HCT116 (cell line): ENCODE measurements at regions of chr15 and their contacts with region 1.

Region 1: DNA sequence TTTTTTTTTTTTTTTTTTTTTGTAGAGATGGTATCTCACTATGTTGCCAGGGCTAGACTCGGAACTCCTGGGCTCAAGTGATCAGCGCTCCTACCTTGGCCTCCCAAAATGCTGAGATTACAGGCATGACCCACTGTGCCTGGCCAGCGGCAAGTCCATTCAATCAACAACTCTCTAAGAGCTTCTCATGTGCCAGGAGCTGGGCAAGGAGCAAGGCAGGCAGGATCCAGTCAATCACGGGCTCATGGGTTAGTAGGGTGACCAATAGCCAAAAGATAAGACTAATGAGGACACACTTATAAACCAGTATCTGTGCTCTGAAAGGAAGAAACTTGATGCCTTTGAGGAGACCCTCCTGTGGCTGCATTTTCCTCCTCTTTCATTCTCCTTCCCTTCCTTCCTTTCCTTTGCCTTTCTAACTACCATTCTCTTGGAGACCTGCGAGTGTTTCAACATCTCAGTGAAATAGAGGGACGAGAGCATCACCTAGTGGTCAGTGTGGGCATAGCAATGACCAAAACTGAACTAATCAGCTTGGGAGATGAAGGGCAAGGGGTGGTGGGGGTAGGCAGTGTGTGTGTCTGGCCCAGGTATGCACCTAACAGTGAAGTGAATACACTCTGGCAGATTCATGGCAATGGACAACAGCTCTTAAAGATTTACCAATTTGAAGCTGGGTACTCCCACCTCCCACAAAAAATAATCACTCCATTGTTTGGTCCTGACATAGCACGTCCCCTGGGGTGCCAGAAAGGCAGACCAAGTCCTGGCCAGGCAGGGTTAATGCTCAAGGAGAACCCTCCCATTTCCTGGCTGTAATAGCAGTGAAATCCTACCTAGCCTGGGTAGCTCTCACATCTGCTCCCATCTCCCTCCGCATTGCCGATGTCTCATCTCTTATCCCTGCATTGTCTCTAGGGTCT is 6.2 kb downstream of the RPP25 start:
- DNase-seq: peak; percentile 60
- ATAC-seq: peak; percentile 70
- H3K4me3 ChIP-seq: no peak overlapping the region
- H3K27ac ChIP-seq: no peak overlapping the region
- H3K4me1 ChIP-seq: peaks cover 26 to 48% of the 10 kb centered on the region in 2 experiments
- H3K27me3 ChIP-seq: no peaks in the 10 kb centered on the region
- CTCF ChIP-seq: peak in 2 of 3 experiments; percentile 98 to 100; a peak in 4 of 6 replicates
- POLR2A ChIP-seq: no peak
- RAD21 ChIP-seq: no peak

Region 2: DNA sequence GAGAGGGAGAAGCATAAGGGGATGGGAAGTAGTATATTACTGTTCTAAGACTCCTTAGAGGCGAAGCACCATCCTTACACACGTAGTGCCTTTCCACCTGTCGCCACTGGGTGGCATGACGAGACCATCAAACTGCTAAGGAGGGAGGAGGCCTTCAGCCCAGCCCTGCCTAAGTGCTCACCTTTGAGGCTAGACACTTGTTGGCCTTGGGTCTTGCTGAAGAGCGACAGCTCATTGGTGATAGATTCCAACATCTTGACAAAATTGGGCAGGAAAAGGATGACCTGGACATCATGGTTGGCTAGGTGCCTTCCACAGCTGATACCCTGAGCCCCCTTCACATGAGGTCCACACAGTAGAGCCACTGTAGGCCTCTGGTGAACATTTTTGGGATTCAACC is 315.1 kb before region 1 on chr15:
- CTCF ChIA-PET with region 1: interaction called, 5 read pairs
- POLR2A ChIA-PET with region 1: no interaction called
- RAD21 ChIA-PET with region 1: no interaction called
- intact Hi-C with region 1: loop called (anchors 1 kb)
- DNase-seq: no peak
- ATAC-seq: peak; percentile 86
- H3K4me3 ChIP-seq: no peak overlapping the region
- H3K27ac ChIP-seq: no peak overlapping the region
- H3K4me1 ChIP-seq: no peaks in the 10 kb centered on the region
- H3K27me3 ChIP-seq: no peaks in the 10 kb centered on the region
- CTCF ChIP-seq: peak; percentile 87 to 94 (median 88)
- POLR2A ChIP-seq: no peak
- RAD21 ChIP-seq: peak; percentile 96

Region 3: DNA sequence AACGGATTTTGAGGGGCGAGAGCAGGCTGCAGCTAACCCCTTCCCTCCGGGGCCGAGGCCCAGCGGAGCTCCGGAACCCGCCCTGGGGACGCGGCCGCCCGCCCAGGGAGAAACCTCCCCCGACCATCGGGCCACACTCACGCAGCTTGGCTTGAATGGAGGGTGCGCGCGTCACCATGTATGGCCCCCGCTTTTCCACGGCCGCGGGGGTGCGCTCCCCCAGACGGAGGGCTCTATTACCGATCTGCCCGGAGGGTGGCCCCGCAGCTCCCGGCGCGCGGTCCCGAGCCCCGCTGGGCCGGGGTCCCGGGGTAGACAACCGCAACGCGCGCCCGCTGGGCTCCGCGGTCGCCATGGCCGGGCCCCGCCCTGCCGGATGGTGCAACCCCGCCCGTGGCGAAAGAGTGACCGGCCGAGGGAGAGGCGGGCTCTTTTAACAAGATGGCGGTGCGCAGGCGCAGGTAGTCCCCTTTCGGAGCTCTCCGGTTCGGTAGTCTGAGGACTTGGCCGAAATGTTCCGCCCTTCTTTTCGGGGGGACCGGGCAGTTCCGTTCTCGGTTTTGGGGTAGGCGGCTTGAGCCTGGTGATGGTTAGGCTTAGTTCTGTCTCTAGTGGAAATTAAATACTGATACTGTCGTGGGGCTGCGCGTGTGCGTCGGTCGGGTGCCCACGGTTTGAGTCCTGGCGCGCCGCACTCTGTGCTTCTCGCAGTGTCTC is 43.7 kb before region 1 on chr15 and contains the start of gene FAM219B:
- CTCF ChIA-PET with region 1: interaction called, 12 read pairs
- POLR2A ChIA-PET with region 1: no interaction called
- RAD21 ChIA-PET with region 1: interaction called in 1 of 2 experiments, 3 read pairs
- intact Hi-C with region 1: no loop called
- DNase-seq: peak; percentile 65
- ATAC-seq: peak; percentile 90
- H3K4me3 ChIP-seq: peak within 1 kb of the TSS; percentile 73 to 96
- H3K27ac ChIP-seq: peak within 1 kb of the TSS; percentile 89
- H3K4me1 ChIP-seq: peaks cover 10 to 17% of the 10 kb centered on the region in 2 experiments; a peak in 2 of 4 replicates
- H3K27me3 ChIP-seq: no peaks in the 10 kb centered on the region
- CTCF ChIP-seq: no peak
- POLR2A ChIP-seq: peak; percentile 89
- RAD21 ChIP-seq: no peak
- total RNA-seq, gene FAM219B: 64.3 TPM

Region 4: DNA sequence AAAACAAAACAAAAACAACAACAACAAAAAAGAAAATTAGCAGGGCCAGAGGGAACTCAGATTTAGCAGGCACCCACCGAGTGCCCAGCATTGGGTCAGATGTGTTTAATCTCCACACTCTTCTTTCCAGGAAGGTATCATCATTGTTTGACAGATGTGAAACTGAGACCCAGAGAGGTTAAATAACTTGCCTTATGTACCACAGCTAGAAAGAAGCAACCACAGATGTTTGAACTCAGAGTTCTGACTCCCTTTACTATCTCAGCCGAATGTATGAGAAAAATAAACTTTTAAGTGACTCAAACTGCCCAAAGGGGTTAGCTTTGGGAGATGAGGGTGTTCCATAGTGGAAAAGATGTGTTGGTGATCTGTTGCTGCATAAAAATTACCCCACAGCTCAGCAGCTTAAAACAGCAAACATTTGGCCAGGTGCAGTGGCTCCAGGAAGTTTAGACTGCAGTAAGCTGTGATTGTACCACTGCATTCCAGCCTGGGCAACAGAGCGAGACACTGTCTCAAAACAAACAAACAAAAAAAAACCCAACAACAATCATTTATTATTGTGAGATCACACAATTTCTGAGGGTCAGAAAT is 10.8 kb after region 1 on chr15:
- CTCF ChIA-PET with region 1: interaction called, 10 read pairs
- POLR2A ChIA-PET with region 1: interaction called, 3 read pairs
- RAD21 ChIA-PET with region 1: no interaction called
- intact Hi-C with region 1: no loop called
- DNase-seq: no peak
- ATAC-seq: no peak
- H3K4me3 ChIP-seq: no peak overlapping the region
- H3K27ac ChIP-seq: no peak overlapping the region
- H3K4me1 ChIP-seq: peaks cover 11 to 42% of the 10 kb centered on the region in 2 experiments
- H3K27me3 ChIP-seq: no peaks in the 10 kb centered on the region
- CTCF ChIP-seq: no peak
- POLR2A ChIP-seq: no peak
- RAD21 ChIP-seq: no peak

Region 5: GRCh38 chr15:74988007-74988800 is 37.9 kb after region 1 on chr15:
- CTCF ChIA-PET with region 1: interaction called, 3 read pairs
- POLR2A ChIA-PET with region 1: no interaction called
- RAD21 ChIA-PET with region 1: interaction called in 1 of 2 experiments, 5 read pairs
- intact Hi-C with region 1: loop called (anchors 5 kb)
- DNase-seq: peak; percentile 41
- ATAC-seq: peak; percentile 99
- H3K4me3 ChIP-seq: no peak overlapping the region
- H3K27ac ChIP-seq: no peak overlapping the region
- H3K4me1 ChIP-seq: peaks cover 10 to 11% of the 10 kb centered on the region in 2 experiments
- H3K27me3 ChIP-seq: 0 out of 2 replicates have a peak, but pooled peaks cover 4% of the 10 kb centered on the region
- CTCF ChIP-seq: peak; percentile 82 to 88 (median 85)
- POLR2A ChIP-seq: no peak
- RAD21 ChIP-seq: peak; percentile 89

Region 6: GRCh38 chr15:75570126-75570845 is 619.9 kb after region 1 on chr15:
- CTCF ChIA-PET with region 1: no interaction called
- POLR2A ChIA-PET with region 1: no interaction called
- RAD21 ChIA-PET with region 1: no interaction called
- intact Hi-C with region 1: no loop called
- DNase-seq: no peak
- ATAC-seq: no peak
- H3K4me3 ChIP-seq: no peak overlapping the region
- H3K27ac ChIP-seq: no peak overlapping the region
- H3K4me1 ChIP-seq: no peaks in the 10 kb centered on the region
- H3K27me3 ChIP-seq: no peaks in the 10 kb centered on the region
- CTCF ChIP-seq: no peak
- POLR2A ChIP-seq: no peak
- RAD21 ChIP-seq: no peak